ENCODE measurements at regions of chr5 and their contacts with region 1.

Region 1: DNA sequence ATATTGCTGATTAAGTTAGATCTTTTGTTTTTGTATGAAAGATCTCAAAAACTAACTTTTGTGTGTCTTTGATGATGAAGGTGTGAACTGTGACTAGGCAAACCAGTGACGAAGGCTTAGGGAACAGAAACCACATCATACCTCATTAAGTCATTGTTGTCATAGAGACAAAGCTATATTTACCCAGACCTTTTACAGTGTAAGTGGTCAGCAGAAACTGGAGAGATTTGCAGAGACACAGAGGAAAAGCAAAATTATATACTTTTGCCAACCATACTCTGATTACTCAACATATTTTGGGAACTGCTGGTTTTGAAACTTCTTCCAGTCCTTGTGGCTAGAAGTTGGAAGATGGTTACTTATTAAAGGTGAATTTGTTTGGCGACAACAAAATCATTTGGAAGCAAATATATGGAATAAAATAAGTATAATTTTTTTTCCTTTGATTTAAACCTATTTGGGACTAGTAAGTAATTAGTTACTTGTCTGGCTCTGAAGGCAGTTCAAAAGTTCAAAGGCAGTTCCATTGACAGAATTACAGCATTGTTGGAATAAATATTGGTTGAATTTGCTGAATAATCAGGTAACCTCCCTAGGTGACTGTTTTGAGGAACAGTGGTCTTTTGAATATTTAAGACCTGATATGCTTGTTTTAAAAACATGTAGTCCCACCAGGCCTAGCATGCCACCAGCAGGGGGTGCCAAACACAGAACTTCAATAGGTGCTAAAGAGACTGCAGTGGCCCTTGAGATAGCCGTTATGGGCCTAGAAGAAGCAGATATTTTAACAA is 103.8 kb downstream of the RPS23 start:
- DNase-seq: peak; percentile 36
- H3K4me3 ChIP-seq: no peak overlapping the region
- H3K27ac ChIP-seq: peak overlapping the region; percentile 11
- H3K4me1 ChIP-seq: no peaks in the 10 kb centered on the region
- H3K27me3 ChIP-seq: no peaks in the 10 kb centered on the region
- CTCF ChIP-seq: peak; percentile 89 to 96

Region 2: DNA sequence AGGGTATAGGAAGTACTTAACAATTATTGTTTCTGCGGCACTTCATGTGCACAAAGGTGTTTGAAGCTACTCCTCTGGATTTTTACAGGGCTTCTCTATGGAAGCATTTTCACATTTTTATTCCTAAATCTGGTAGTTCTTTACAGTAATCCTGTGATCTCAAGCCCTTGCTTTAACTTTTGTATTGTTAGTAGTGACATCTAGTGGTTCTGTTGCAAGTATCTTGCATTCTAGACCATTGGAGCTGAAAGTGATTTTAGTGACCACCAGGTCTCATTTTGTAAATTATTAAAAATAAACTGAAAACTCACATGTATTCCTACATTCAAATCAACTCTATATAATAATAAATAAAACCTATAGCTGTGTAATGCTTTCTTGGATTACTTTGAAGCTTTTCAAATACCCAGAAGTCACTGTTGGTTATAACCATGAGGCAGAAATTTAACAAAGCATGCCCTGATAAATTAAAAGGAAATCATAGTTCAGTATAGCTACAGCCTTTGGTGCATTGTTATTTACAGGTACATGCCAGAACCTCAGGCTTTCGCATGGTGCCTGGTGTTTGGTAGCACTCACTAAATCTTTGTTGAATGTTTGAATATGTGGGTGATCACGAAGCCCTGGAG is 85.0 kb after region 1 on chr5:
- CTCF ChIA-PET with region 1: no interaction called
- dilution Hi-C with region 1: no loop called
- in situ Hi-C with region 1: no loop called
- intact Hi-C with region 1: loop called (anchors 1 kb)
- DNase-seq: peak; percentile 10
- H3K4me3 ChIP-seq: no peak overlapping the region
- H3K27ac ChIP-seq: no peak overlapping the region
- H3K4me1 ChIP-seq: no peaks in the 10 kb centered on the region
- H3K27me3 ChIP-seq: no peaks in the 10 kb centered on the region
- CTCF ChIP-seq: peak; percentile 34 to 45